ENCODE measurements at regions of chr9 and their contacts with region 1.

Region 1: DNA sequence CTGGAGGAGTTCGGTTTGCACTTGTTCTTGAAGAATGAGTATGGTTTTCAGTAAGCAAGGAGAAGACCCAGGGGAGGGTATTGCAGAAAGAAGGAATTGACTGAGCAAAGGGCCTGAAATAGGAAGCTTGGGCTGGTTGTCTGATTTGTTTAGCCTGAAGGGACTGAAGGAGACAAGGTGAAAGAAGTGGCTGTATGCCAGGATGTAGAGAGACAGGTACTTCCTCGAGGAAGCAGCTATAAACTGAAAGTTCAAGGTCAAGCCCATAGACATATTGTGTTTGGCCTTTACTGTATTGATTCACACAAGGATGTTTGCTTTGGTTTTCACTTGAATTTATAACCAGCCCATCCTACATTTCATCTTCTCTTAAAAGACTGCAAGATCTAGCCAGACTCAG is 183.1 kb downstream of the PALM2AKAP2 start:
- DNase-seq: peak; percentile 34
- ATAC-seq: peak; percentile 42
- H3K4me3 ChIP-seq: no peak overlapping the region
- H3K27ac ChIP-seq: no peak overlapping the region
- H3K4me1 ChIP-seq: no peaks in the 10 kb centered on the region
- H3K27me3 ChIP-seq: no peaks in the 10 kb centered on the region
- CTCF ChIP-seq: no peak

Region 2: GRCh38 chr9:109926421-109926869 is 36.6 kb before region 1 on chr9:
- CTCF ChIA-PET with region 1: no interaction called
- POLR2A ChIA-PET with region 1: interaction called, 16 read pairs
- intact Hi-C with region 1: no loop called
- DNase-seq: no peak
- ATAC-seq: no peak
- H3K4me3 ChIP-seq: no peak overlapping the region
- H3K27ac ChIP-seq: no peak overlapping the region
- H3K4me1 ChIP-seq: peaks cover 7% of the 10 kb centered on the region
- H3K27me3 ChIP-seq: no peaks in the 10 kb centered on the region
- CTCF ChIP-seq: no peak

Region 3: GRCh38 chr9:110152704-110153374 is 189.8 kb after region 1 on chr9:
- CTCF ChIA-PET with region 1: no interaction called
- POLR2A ChIA-PET with region 1: no interaction called
- intact Hi-C with region 1: no loop called
- DNase-seq: peak; percentile 65
- ATAC-seq: peak; percentile 46; the same call in 1 of the 2 replicates
- H3K4me3 ChIP-seq: no peak overlapping the region
- H3K27ac ChIP-seq: no peak overlapping the region
- H3K4me1 ChIP-seq: 0 out of 2 replicates have a peak, but pooled peaks cover 3% of the 10 kb centered on the region
- H3K27me3 ChIP-seq: no peaks in the 10 kb centered on the region
- CTCF ChIP-seq: peak; percentile 84

Region 4: DNA sequence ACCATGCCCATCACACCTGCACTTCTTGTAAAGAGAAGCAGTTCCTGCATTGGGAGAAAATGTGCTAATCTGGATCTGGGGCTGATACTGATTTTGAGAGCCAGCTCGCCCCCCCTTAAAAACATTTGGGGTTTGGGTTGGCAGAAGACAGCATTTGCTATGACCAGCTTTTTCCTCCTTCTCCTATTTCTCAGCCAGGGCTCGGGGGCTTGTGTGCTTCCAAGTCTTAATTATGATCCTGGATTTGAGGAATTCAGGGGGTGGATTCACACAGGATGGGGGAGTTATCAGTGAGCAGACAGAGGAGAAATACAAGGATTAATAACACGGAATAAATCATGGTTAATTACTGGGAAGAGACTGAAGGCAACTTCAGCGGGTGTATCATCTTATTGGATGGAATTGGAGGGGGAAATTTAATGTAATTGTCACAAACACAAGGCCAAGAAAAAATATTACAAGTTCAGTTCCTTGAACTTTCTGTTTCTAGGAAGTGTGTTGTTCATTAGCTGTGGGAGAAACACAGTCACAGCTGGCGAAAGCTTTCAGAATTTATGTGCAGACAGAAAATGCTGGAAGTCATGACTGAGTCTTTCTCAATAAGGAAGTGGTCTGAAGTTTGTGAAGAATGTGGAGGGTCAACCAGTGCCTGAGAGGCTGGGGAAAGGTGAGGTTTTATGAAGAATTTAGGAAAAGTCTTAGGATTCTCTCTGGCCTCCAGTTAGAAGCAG is 229.6 kb after region 1 on chr9:
- CTCF ChIA-PET with region 1: no interaction called
- POLR2A ChIA-PET with region 1: no interaction called
- intact Hi-C with region 1: no loop called
- DNase-seq: no peak
- ATAC-seq: no peak
- H3K4me3 ChIP-seq: no peak overlapping the region
- H3K27ac ChIP-seq: no peak overlapping the region
- H3K4me1 ChIP-seq: peaks cover 4% of the 10 kb centered on the region
- H3K27me3 ChIP-seq: no peaks in the 10 kb centered on the region
- CTCF ChIP-seq: no peak

Measured in PC-3 (cell line).